Tibial artery (tissue), 4 donors: ENCODE measurements at regions of chr7 and their contacts with region 1.

Region 1: GRCh38 chr7:92898798-92899197 is 62.4 kb upstream of the CDK6 start:
- DNase-seq: no peak
- H3K4me3 ChIP-seq: no peak overlapping the region
- H3K27ac ChIP-seq: no peak overlapping the region
- H3K4me1 ChIP-seq: no peaks in the 10 kb centered on the region
- H3K27me3 ChIP-seq: no peaks in the 10 kb centered on the region
- CTCF ChIP-seq: no peak

Region 2: DNA sequence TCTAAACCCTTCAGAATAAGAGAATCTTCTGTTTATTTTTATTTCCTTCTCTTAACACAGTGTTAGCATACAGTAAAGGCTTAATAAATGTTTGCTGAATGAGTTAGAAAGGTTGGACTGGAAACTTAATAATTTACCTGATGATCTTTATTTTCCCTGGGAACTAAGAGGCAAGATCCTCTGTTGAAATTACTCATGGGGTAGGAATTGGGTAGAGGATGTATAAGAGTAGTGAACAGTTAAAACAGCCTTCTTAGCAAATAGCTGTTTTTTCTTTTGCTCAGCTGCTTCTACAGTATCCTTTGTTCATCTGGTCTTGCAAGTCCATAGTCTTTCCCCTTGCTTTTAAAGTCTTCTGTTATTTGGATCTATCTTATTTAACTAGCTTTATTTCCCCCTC is 878.2 kb before region 1 on chr7:
- intact Hi-C with region 1: loop called (anchors 5 kb)
- DNase-seq: no peak
- H3K4me3 ChIP-seq: no peak overlapping the region
- H3K27ac ChIP-seq: no peak overlapping the region
- H3K4me1 ChIP-seq: peaks cover 0 to 16% (median 0%) of the 10 kb centered on the region in 4 donors
- H3K27me3 ChIP-seq: no peaks in the 10 kb centered on the region
- CTCF ChIP-seq: no peak

Region 3: GRCh38 chr7:92968502-92968901 is 69.7 kb after region 1 on chr7:
- intact Hi-C with region 1: no loop called
- DNase-seq: no peak
- H3K4me3 ChIP-seq: no peak overlapping the region
- H3K27ac ChIP-seq: no peak overlapping the region
- H3K4me1 ChIP-seq: peaks cover 0 to 3% (median 0%) of the 10 kb centered on the region in 4 donors
- H3K27me3 ChIP-seq: no peaks in the 10 kb centered on the region
- CTCF ChIP-seq: no peak